ENCODE measurements at regions of chr14 and their contacts with region 1.

Region 1: DNA sequence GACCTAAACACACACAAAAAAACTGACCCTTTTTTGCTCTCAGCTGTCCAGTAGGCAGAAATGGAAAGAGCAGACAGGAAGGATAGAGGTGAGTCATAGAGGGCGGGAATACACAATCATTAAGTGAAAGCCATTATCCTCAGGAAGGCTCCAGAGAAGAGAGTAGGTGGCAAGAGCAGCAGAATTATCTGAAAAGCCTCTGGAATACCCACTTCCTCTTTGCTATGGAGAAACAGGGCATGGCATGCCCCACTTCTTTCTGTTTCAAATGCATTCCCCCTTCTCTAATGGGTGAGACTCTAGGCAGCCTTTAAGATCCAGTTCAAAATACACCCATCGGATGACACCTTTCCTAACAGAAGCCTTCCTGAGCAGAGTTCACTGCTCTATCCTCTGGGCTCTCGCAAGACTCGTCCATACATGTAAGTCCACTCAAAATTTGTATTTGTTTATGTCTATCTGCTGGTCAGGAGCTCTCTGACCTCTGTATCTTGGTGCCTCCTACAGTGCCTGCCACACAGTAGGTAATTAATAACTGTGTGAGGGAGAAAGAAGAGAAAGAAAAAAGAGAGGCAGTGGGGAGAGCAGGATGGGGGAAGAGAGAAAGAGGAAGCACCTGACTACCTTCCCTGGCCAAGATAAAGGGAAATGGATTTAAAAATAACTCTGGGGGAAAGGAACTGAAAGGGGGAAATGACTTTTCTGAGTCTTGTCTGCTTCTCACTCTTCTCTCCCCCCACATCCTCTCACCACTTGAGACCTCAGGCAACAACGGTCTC is 8.5 kb downstream of the KLHL33 start:
- DNase-seq: peak; percentile 79
- ATAC-seq: peak; percentile 76
- H3K4me3 ChIP-seq: peak overlapping the region; percentile 4 to 46 (median 29)
- H3K4me3 Mint-ChIP-seq: peak overlapping the region; percentile 83
- H3K27ac ChIP-seq: peak overlapping the region; percentile 89
- H3K27ac Mint-ChIP-seq: peak overlapping the region; percentile 98
- H3K4me1 ChIP-seq: peaks cover 41 to 49% of the 10 kb centered on the region in 2 donors
- H3K4me1 Mint-ChIP-seq: peaks cover 60% of the 10 kb centered on the region
- H3K27me3 ChIP-seq: no peaks in the 10 kb centered on the region
- H3K27me3 Mint-ChIP-seq: no peaks in the 10 kb centered on the region
- CTCF ChIP-seq: no peak

Region 2: DNA sequence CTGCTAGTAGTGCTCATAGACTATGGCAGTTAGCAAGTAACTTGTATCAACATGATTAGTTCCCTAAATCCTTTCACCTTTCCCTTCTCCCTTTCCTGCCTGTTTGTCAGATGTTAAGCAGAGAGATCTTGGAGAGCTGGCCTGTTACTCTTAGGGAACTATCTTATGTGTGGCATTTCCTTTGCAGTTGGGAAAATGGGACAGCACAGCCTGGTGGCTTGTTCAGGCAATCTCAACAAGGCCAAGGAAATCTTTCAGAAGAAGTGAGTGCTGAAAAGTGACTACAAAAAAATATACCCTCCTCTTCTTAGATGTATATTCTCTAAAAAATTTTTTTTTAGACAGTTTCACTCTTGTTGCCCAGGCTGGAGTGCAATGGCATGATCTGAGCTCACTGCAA is 76.6 kb before region 1 on chr14:
- CTCF ChIA-PET with region 1: no interaction called
- POLR2A ChIA-PET with region 1: no interaction called
- intact Hi-C with region 1: no loop called
- DNase-seq: no peak
- ATAC-seq: no peak
- H3K4me3 ChIP-seq: no peak overlapping the region
- H3K4me3 Mint-ChIP-seq: no peak overlapping the region
- H3K27ac ChIP-seq: no peak overlapping the region
- H3K27ac Mint-ChIP-seq: peak overlapping the region; percentile 43
- H3K4me1 ChIP-seq: no peaks in the 10 kb centered on the region
- H3K4me1 Mint-ChIP-seq: no peaks in the 10 kb centered on the region
- H3K27me3 ChIP-seq: no peaks in the 10 kb centered on the region
- H3K27me3 Mint-ChIP-seq: no peaks in the 10 kb centered on the region
- CTCF ChIP-seq: no peak

Region 3: GRCh38 chr14:20440882-20441281 is 13.5 kb after region 1 on chr14:
- CTCF ChIA-PET with region 1: no interaction called
- POLR2A ChIA-PET with region 1: no interaction called
- intact Hi-C with region 1: loop called (anchors 1 kb)
- DNase-seq: no peak
- ATAC-seq: peak; percentile 72
- H3K4me3 ChIP-seq: no peak overlapping the region
- H3K4me3 Mint-ChIP-seq: peak overlapping the region; percentile 60
- H3K27ac ChIP-seq: peak overlapping the region; percentile 46 to 56
- H3K27ac Mint-ChIP-seq: peak overlapping the region; percentile 88
- H3K4me1 ChIP-seq: peaks cover 45 to 57% of the 10 kb centered on the region in 2 donors
- H3K4me1 Mint-ChIP-seq: peaks cover 53% of the 10 kb centered on the region
- H3K27me3 ChIP-seq: no peaks in the 10 kb centered on the region
- H3K27me3 Mint-ChIP-seq: no peaks in the 10 kb centered on the region
- CTCF ChIP-seq: no peak

Measured in B cell (primary cell).